ENCODE measurements at regions of chr15 and their contacts with region 1.

Region 1: DNA sequence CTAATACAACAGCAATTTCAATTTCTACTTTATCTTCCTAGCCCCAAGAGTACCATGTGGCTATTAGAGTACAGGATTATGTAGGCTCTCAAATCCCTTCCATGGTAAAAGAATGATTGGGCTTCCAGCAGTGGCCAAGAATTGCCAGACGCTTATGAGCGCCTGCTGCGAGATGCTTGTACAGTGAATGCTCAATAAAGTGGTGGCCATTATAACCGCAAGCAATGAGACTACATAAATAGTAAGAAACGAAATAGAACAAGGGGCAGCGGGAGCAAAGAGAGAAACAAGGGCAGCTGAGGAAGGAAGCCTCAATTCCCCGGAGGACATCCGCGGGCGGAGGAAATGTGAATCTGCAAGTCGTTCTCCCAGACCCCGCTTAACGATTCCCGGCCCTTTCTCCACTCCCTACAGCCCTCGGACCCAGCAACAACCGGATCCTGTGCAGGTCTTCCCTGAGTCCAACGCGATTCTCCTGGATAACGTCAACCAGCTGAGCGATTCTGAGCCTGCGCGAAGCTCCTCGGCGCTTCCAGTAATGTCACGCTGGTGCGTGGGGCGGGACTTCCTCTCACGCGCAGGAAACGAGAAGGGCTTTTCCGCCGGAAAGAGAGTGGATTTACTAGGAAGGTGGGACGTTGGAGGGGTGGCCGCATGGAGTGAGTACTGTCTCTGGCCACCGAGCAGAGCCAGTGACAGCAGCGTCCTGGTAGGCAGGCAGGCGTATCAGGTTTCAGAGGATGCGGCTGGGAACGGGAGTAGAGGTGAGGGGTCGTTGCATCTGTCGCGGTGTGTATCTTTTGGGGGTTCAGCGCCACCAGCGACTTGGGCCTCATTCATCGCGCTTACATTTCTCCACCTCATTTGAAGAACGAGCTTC is 40.5 kb upstream of the AP3B2 start:
- DNase-seq: peak; percentile 91
- ATAC-seq: peak; percentile 92
- H3K4me3 Mint-ChIP-seq: peak overlapping the region; percentile 94
- H3K27ac Mint-ChIP-seq: peak overlapping the region; percentile 96
- H3K4me1 Mint-ChIP-seq: peaks cover 45% of the 10 kb centered on the region
- H3K27me3 Mint-ChIP-seq: no peaks in the 10 kb centered on the region
- CTCF ChIP-seq: no peak

Region 2: DNA sequence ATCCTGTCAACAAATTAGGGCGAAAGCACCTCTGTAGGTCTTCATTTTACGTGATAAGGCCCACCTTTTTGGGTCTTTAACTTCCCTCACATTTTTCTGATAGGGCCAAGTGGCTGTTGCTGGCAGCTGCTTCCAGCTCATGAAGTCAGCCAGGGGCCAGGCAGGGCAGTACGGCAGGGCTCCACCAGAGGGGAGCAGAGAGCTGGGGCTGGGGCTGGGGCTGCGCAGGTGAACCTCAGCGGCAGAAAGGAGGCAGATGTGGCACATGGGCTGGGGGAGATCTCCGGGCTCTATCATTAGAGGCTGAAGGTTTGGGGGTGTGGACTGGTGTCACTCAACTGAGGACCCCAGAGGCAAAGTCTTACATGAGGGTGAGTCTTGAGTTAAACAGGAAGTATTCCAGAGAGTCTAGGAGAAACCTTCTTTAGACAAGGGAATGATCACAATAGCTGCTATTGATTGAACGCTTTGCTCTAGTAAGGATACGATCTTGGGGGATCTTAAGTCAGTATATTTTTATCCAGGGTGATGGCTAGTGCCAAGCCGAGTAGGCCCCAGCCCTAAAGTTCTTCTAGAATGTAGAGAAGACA is 641.6 kb before region 1 on chr15:
- CTCF ChIA-PET with region 1: no interaction called
- POLR2A ChIA-PET with region 1: no interaction called
- intact Hi-C with region 1: no loop called
- DNase-seq: peak; percentile 81
- ATAC-seq: peak; percentile 100
- H3K4me3 Mint-ChIP-seq: no peak overlapping the region
- H3K27ac Mint-ChIP-seq: no peak overlapping the region
- H3K4me1 Mint-ChIP-seq: no peaks in the 10 kb centered on the region
- H3K27me3 Mint-ChIP-seq: no peaks in the 10 kb centered on the region
- CTCF ChIP-seq: peak; percentile 81

Region 3: GRCh38 chr15:82530606-82531379 is 219.4 kb before region 1 on chr15:
- CTCF ChIA-PET with region 1: interaction called, 10 read pairs
- POLR2A ChIA-PET with region 1: no interaction called
- intact Hi-C with region 1: no loop called
- DNase-seq: peak; percentile 86
- ATAC-seq: peak; percentile 92
- H3K4me3 Mint-ChIP-seq: peak overlapping the region; percentile 40
- H3K27ac Mint-ChIP-seq: peak overlapping the region; percentile 63
- H3K4me1 Mint-ChIP-seq: peaks cover 15% of the 10 kb centered on the region
- H3K27me3 Mint-ChIP-seq: no peaks in the 10 kb centered on the region
- CTCF ChIP-seq: peak; percentile 76

Region 4: GRCh38 chr15:82540055-82540983 is 209.9 kb before region 1 on chr15 and contains the start of gene RPS17:
- CTCF ChIA-PET with region 1: interaction called, 8 read pairs
- POLR2A ChIA-PET with region 1: interaction called, 21 read pairs
- intact Hi-C with region 1: no loop called
- DNase-seq: peak; percentile 98
- ATAC-seq: peak; percentile 95
- H3K4me3 Mint-ChIP-seq: peak within 1 kb of the TSS; percentile 94
- H3K27ac Mint-ChIP-seq: peak within 1 kb of the TSS; percentile 98
- H3K4me1 Mint-ChIP-seq: peaks cover 38% of the 10 kb centered on the region
- H3K27me3 Mint-ChIP-seq: no peaks in the 10 kb centered on the region
- CTCF ChIP-seq: peak; percentile 97
- total RNA-seq, gene RPS17: 3,057 to 3,069 TPM

Region 5: GRCh38 chr15:82809404-82810060 is 59.3 kb after region 1 on chr15 and contains the start of gene WHAMM:
- CTCF ChIA-PET with region 1: interaction called, 9 read pairs
- POLR2A ChIA-PET with region 1: interaction called, 23 read pairs
- intact Hi-C with region 1: loop called (anchors 1 kb)
- DNase-seq: peak; percentile 98
- ATAC-seq: peak; percentile 96
- H3K4me3 Mint-ChIP-seq: peak within 1 kb of the TSS; percentile 84
- H3K27ac Mint-ChIP-seq: peak within 1 kb of the TSS; percentile 92
- H3K4me1 Mint-ChIP-seq: peaks cover 30% of the 10 kb centered on the region
- H3K27me3 Mint-ChIP-seq: no peaks in the 10 kb centered on the region
- CTCF ChIP-seq: no peak
- total RNA-seq, gene WHAMM: 5.8 to 6.1 TPM

Measured in activated CD8-positive, alpha-beta T cell treated with anti-CD3 and anti-CD28 coated beads for 36 hours (primary cell).